Naive thymus-derived CD4-positive, alpha-beta T cell (primary cell): ENCODE measurements at regions of chr10 and their contacts with region 1.

Region 1: GRCh38 chr10:63465293-63466143 is at the start of gene JMJD1C:
- DNase-seq: peak; percentile 49 to 72 (median 63)
- ATAC-seq: peak; percentile 85
- H3K4me3 ChIP-seq: peak within 1 kb of the TSS; percentile 89
- H3K4me3 Mint-ChIP-seq: peak within 1 kb of the TSS; percentile 88 to 98 (median 95)
- H3K27ac ChIP-seq: peak within 1 kb of the TSS; percentile 86
- H3K27ac Mint-ChIP-seq: peak within 1 kb of the TSS; percentile 68 to 97 (median 94)
- H3K4me1 ChIP-seq: peaks cover 0 to 16% of the 10 kb centered on the region in 2 donors
- H3K4me1 Mint-ChIP-seq: peaks cover 14 to 68% (median 34%) of the 10 kb centered on the region in 7 donors
- H3K27me3 ChIP-seq: no peaks in the 10 kb centered on the region
- H3K27me3 Mint-ChIP-seq: peaks cover 0 to 31% (median 0%) of the 10 kb centered on the region in 5 donors
- total RNA-seq, gene JMJD1C: 67.6 to 331 (median 137) TPM

Region 2: DNA sequence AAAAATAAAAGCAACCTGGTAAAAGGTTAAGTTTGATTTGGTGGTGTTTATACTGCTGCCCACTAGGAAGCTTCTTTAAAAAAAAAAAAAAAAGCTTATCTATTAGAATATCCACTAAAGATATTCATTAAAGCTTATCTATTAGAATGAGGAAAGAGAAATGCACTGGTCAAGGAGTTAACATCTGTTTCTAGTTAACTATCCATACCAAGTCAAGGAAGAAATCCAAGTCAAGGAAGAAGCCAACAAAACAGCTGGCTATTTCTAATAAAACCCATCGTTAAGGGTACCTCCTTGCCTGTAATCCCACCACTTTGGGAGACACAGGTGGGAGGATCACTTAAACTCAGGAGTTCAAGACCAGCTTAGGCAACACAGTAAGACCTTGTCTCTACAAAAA is 82.4 kb before region 1 on chr10:
- CTCF ChIA-PET with region 1: no interaction called
- POLR2A ChIA-PET with region 1: no interaction called
- intact Hi-C with region 1: loop called (anchors 2 to 5 kb)
- DNase-seq: no peak
- ATAC-seq: no peak
- H3K4me3 ChIP-seq: no peak overlapping the region
- H3K4me3 Mint-ChIP-seq: no peak overlapping the region
- H3K27ac ChIP-seq: no peak overlapping the region
- H3K27ac Mint-ChIP-seq: no peak overlapping the region
- H3K4me1 ChIP-seq: peaks cover 4 to 14% of the 10 kb centered on the region in 2 donors
- H3K4me1 Mint-ChIP-seq: peaks cover 25 to 57% (median 46%) of the 10 kb centered on the region in 7 donors
- H3K27me3 ChIP-seq: no peaks in the 10 kb centered on the region
- H3K27me3 Mint-ChIP-seq: no peaks in the 10 kb centered on the region

Region 3: GRCh38 chr10:63388421-63389031 is 77.0 kb before region 1 on chr10:
- CTCF ChIA-PET with region 1: no interaction called
- POLR2A ChIA-PET with region 1: no interaction called
- intact Hi-C with region 1: loop called (anchors 2 to 5 kb)
- DNase-seq: peak in 6 of 9 donors; percentile 20 to 60 (median 47)
- ATAC-seq: peak; percentile 77
- H3K4me3 ChIP-seq: peak overlapping the region; percentile 36
- H3K4me3 Mint-ChIP-seq: peak overlapping the region; percentile 42 to 81 (median 72)
- H3K27ac ChIP-seq: peak overlapping the region; percentile 5
- H3K27ac Mint-ChIP-seq: peak overlapping the region; percentile 21 to 76 (median 49)
- H3K4me1 ChIP-seq: peaks cover 12 to 21% of the 10 kb centered on the region in 2 donors
- H3K4me1 Mint-ChIP-seq: peaks cover 45 to 79% (median 69%) of the 10 kb centered on the region in 7 donors
- H3K27me3 ChIP-seq: no peaks in the 10 kb centered on the region
- H3K27me3 Mint-ChIP-seq: no peaks in the 10 kb centered on the region

Region 4: GRCh38 chr10:63421591-63421990 is 43.9 kb before region 1 on chr10:
- CTCF ChIA-PET with region 1: no interaction called
- POLR2A ChIA-PET with region 1: interaction called, 3 read pairs
- intact Hi-C with region 1: loop called in 1 of 2 experiments (anchors 2 kb)
- DNase-seq: peak in 7 of 9 donors; percentile 35 to 71 (median 53)
- ATAC-seq: peak; percentile 95
- H3K4me3 ChIP-seq: no peak overlapping the region
- H3K4me3 Mint-ChIP-seq: peak overlapping the region in 9 of 10 donors; percentile 49 to 73 (median 68)
- H3K27ac ChIP-seq: peak overlapping the region; percentile 36
- H3K27ac Mint-ChIP-seq: peak overlapping the region; percentile 37 to 97 (median 91)
- H3K4me1 ChIP-seq: peaks cover 0 to 15% of the 10 kb centered on the region in 2 donors
- H3K4me1 Mint-ChIP-seq: peaks cover 16 to 61% (median 49%) of the 10 kb centered on the region in 7 donors
- H3K27me3 ChIP-seq: no peaks in the 10 kb centered on the region
- H3K27me3 Mint-ChIP-seq: no peaks in the 10 kb centered on the region

Region 5: GRCh38 chr10:63481815-63482421 is 16.4 kb after region 1 on chr10:
- CTCF ChIA-PET with region 1: no interaction called
- POLR2A ChIA-PET with region 1: interaction called, 4 read pairs
- intact Hi-C with region 1: loop called in 1 of 2 experiments (anchors 2 kb)
- DNase-seq: no peak
- ATAC-seq: no peak
- H3K4me3 ChIP-seq: no peak overlapping the region
- H3K4me3 Mint-ChIP-seq: no peak overlapping the region
- H3K27ac ChIP-seq: no peak overlapping the region
- H3K27ac Mint-ChIP-seq: no peak overlapping the region
- H3K4me1 ChIP-seq: peaks cover 0 to 3% of the 10 kb centered on the region in 2 donors
- H3K4me1 Mint-ChIP-seq: peaks cover 6 to 43% (median 29%) of the 10 kb centered on the region in 7 donors
- H3K27me3 ChIP-seq: no peaks in the 10 kb centered on the region
- H3K27me3 Mint-ChIP-seq: no peaks in the 10 kb centered on the region

Region 6: DNA sequence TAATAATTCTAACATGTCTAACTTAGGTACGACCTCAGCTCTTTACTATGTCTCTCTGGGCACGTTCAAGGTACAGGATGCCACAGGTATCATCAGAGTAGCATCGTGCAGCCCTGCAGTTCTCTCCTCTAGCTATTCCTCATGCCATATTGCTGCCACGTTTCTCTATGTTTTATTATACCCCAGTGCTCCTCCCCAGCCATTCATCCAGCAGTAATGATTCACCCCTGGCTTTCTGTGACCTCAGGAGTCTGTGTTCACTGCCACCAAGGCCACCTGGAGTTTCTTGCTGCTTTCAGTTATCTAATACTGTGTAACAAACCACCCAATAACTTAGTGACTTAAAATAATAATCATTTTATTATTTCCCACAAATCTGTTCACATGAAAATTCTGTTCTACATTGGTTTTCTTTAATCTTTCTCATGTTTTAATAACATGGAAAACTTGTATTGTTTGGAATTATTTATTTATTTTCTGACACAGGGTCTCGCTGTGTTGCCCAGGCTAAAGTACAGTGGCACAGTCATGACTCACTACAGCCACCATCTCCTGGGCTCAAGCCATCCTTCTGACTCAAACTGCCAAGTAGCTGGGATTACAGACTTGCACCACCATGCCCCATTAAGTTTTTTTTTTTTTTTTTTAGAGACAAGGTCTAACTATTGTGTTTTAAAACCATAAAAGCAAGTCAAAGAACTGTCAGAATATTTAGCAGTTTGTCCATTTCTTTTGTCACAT is 77.5 kb after region 1 on chr10:
- CTCF ChIA-PET with region 1: no interaction called
- POLR2A ChIA-PET with region 1: no interaction called
- intact Hi-C with region 1: no loop called
- DNase-seq: no peak
- ATAC-seq: no peak
- H3K4me3 ChIP-seq: no peak overlapping the region
- H3K4me3 Mint-ChIP-seq: no peak overlapping the region
- H3K27ac ChIP-seq: no peak overlapping the region
- H3K27ac Mint-ChIP-seq: no peak overlapping the region
- H3K4me1 ChIP-seq: no peaks in the 10 kb centered on the region
- H3K4me1 Mint-ChIP-seq: peaks cover 0 to 19% (median 9%) of the 10 kb centered on the region in 7 donors
- H3K27me3 ChIP-seq: no peaks in the 10 kb centered on the region
- H3K27me3 Mint-ChIP-seq: no peaks in the 10 kb centered on the region

Region 7: DNA sequence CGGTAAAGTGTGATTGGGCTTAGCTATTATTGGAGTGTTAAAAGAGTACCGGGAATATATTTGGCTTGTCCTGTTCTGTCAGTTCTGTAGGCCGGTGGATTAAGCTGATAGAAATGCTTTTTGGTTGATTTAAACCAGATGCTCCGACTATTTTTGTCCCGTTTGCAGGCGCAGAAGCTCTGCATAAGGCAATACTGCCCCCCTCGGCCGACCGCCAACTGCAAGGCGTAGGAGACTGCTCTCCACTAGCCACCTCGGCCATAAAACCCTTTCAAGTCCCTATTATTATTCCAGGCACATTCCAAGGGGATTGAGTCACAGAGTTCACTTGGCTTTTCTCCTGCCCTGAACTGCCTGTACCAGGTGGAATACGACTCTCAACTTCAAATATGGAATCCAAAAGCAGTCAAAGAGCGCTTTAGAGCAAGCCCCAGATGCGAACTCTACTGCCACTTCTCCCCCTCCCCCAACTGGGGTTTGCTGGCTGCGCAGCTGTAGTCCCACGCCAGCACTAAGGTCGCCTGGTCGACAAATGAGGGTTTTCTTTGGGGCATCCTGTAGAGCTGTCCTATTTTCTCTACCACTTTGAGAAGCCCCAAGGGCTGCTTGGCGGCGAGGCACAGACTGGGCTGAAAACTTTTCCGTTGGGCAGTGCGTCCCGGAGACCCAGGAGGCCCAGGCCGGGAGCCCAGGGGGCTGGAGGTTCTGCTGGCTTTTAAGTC is 164.0 kb after region 1 on chr10:
- CTCF ChIA-PET with region 1: no interaction called
- POLR2A ChIA-PET with region 1: interaction called, 3 read pairs
- intact Hi-C with region 1: loop called (anchors 1 kb)
- DNase-seq: peak; percentile 61 to 81 (median 78)
- ATAC-seq: peak; percentile 81
- H3K4me3 ChIP-seq: peak overlapping the region; percentile 90
- H3K4me3 Mint-ChIP-seq: peak overlapping the region; percentile 87 to 98 (median 95)
- H3K27ac ChIP-seq: peak overlapping the region; percentile 69
- H3K27ac Mint-ChIP-seq: peak overlapping the region; percentile 79 to 95 (median 90)
- H3K4me1 ChIP-seq: peaks cover 0 to 17% of the 10 kb centered on the region in 2 donors
- H3K4me1 Mint-ChIP-seq: peaks cover 19 to 40% (median 26%) of the 10 kb centered on the region in 7 donors
- H3K27me3 ChIP-seq: no peaks in the 10 kb centered on the region
- H3K27me3 Mint-ChIP-seq: peaks cover 0 to 3% (median 0%) of the 10 kb centered on the region in 5 donors